PC-9 (cell line): ENCODE measurements at regions of chr2 and their contacts with region 1.

Region 1: GRCh38 chr2:173286153-173286809 is 68.4 kb upstream of the CDCA7 start:
- DNase-seq: no peak
- H3K4me3 ChIP-seq: no peak overlapping the region
- H3K27ac ChIP-seq: no peak overlapping the region
- H3K4me1 ChIP-seq: no peaks in the 10 kb centered on the region
- H3K27me3 ChIP-seq: no peaks in the 10 kb centered on the region
- CTCF ChIP-seq: no peak; the same call in 1 of the 2 replicates

Region 2: GRCh38 chr2:173217116-173217840 is 69.0 kb before region 1 on chr2:
- CTCF ChIA-PET with region 1: no interaction called
- POLR2A ChIA-PET with region 1: interaction called, 17 read pairs
- intact Hi-C with region 1: no loop called
- DNase-seq: no peak
- H3K4me3 ChIP-seq: no peak overlapping the region
- H3K27ac ChIP-seq: no peak overlapping the region
- H3K4me1 ChIP-seq: no peaks in the 10 kb centered on the region
- H3K27me3 ChIP-seq: no peaks in the 10 kb centered on the region
- CTCF ChIP-seq: no peak

Region 3: GRCh38 chr2:173271825-173272224 is 14.5 kb before region 1 on chr2:
- CTCF ChIA-PET with region 1: interaction called, 10 read pairs
- POLR2A ChIA-PET with region 1: interaction called, 21 read pairs
- intact Hi-C with region 1: no loop called
- DNase-seq: peak; percentile 44 to 72
- H3K4me3 ChIP-seq: no peak overlapping the region
- H3K27ac ChIP-seq: no peak overlapping the region
- H3K4me1 ChIP-seq: peaks cover 14% of the 10 kb centered on the region
- H3K27me3 ChIP-seq: no peaks in the 10 kb centered on the region
- CTCF ChIP-seq: no peak